ENCODE measurements at regions of chr10 and their contacts with region 1.

Region 1: GRCh38 chr10:34804306-34804705 is 10.8 kb downstream of the PARD3 start:
- DNase-seq: peak; percentile 86
- ATAC-seq: peak; percentile 91
- H3K4me3 ChIP-seq: no peak overlapping the region
- H3K27ac ChIP-seq: no peak overlapping the region
- H3K4me1 ChIP-seq: peaks cover 11% of the 10 kb centered on the region
- H3K27me3 ChIP-seq: no peaks in the 10 kb centered on the region
- CTCF ChIP-seq: no peak

Region 2: GRCh38 chr10:34768261-34768971 is 35.9 kb before region 1 on chr10:
- CTCF ChIA-PET with region 1: no interaction called
- POLR2A ChIA-PET with region 1: no interaction called
- intact Hi-C with region 1: loop called (anchors 2 kb)
- DNase-seq: peak; percentile 99
- ATAC-seq: peak; percentile 100
- H3K4me3 ChIP-seq: peak overlapping the region; percentile 41
- H3K27ac ChIP-seq: peak overlapping the region; percentile 67
- H3K4me1 ChIP-seq: peaks cover 18% of the 10 kb centered on the region
- H3K27me3 ChIP-seq: no peaks in the 10 kb centered on the region
- CTCF ChIP-seq: no peak